Testis (tissue), 5 donors: ENCODE measurements at regions of chr9 and their contacts with region 1.

Region 1: DNA sequence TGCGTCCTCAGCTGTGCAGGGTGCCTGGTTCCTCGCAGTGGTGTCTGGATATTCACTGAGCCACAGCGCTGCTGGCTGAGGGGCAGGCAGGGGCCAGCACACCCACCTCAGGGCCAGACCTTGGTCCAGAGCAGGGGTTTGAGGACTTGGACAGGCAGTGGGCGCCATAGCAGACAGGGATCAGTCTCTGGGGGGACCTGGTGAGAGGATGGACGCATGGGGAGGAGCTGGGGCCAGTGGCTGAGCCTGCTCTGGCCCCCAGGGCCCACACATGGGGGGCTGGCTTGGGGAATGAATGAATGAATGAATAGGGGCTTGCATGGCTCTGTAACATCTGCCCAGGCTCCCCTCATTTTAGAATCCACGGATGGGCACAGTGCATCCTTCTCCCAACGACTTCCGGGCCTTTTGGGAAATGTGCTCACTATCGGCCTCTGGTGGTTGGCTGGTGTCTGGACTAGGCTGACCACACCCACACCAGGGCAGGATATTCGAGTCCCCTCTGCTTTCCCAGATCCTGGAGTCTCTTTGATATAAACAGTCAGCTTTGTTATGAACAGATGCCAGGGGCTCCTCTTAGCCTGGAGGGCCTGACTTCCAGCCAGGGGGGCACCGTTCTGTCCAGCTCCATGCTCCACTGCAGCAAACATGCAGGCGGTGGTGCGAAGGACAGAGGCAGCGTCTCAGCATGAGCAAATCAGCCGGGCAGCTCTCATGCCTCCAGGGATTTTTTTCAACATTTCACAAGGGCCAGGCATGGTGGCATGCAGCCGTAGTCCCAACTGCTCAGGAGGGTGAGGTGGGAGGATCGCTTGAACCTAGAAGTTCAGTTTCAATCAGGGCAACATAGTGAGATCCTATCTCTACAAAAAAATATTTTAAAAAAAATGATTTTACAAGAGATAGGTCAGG is 62.6 kb downstream of the NEK6 start:
- DNase-seq: peak; percentile 84
- H3K4me3 ChIP-seq: no peak overlapping the region
- H3K27ac ChIP-seq: no peak overlapping the region
- H3K4me1 ChIP-seq: no peaks in the 10 kb centered on the region
- H3K27me3 ChIP-seq: no peaks in the 10 kb centered on the region
- CTCF ChIP-seq: peak; percentile 79 to 87 (median 85)
- POLR2A ChIP-seq: no peak

Region 2: DNA sequence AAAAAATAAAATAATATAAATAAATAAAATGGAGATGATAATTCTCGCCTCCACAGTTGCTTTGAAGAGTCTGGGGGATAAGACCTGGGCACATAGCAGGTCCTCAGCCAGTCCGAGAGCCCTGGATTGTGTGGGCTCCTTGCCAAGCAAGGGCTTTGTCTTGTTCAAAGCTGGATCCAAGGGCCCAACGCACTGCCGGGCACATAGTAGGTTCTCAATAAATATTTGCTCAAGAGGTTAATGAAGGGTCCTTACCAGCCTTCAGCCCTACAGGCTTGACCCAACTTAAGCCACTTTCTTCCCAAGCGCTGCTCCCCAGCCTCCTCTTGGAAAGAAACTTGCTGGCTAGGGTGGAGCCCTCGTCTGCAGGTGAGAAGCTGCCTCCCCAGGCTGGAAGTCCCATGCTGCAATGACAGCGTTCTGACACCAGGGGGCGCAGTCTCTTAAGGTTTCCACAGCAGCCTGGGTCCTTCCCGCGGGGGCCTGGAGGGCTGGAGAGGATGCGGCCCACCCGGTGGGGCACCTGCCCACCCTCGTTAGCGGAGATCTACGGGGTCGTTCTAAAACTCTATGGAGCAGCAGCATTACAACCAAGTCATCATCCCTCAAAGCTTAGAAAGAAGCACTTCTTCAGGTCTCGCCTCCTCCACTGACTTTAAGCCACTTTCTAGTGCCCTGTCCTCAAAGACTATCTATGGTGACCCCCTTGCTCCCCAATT is 193.6 kb before region 1 on chr9:
- intact Hi-C with region 1: loop called (anchors 5 kb)
- DNase-seq: peak; percentile 88
- H3K4me3 ChIP-seq: no peak overlapping the region
- H3K27ac ChIP-seq: no peak overlapping the region
- H3K4me1 ChIP-seq: no peaks in the 10 kb centered on the region
- H3K27me3 ChIP-seq: no peaks in the 10 kb centered on the region
- CTCF ChIP-seq: peak; percentile 97 to 100 (median 98)
- POLR2A ChIP-seq: no peak